ENCODE measurements at regions of chr16 and their contacts with region 1.

Region 1: DNA sequence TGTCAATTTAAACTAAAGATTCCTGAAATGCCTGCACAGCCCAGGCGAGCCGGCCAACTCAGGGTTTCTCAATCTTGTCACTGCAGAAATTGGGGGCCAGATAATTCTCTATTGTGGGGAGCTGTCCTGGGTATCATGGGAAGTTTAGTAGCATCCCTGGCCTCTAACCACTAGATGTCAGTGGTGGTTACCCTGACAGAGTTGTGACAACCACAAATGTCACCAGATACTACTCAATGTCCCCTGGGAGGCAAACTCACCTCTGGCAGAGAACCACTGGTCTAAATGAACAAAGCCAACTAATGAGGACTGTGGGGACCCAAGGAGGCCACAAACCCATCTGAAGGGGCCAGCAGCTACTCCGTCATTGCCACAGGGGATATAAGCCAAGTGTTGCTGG is 90.9 kb downstream of the MYH11 start:
- DNase-seq: peak; percentile 81
- ATAC-seq: peak; percentile 99
- H3K4me3 ChIP-seq: no peak overlapping the region
- H3K4me3 Mint-ChIP-seq: no peak overlapping the region
- H3K27ac ChIP-seq: no peak overlapping the region
- H3K27ac Mint-ChIP-seq: peak overlapping the region; percentile 22
- H3K4me1 ChIP-seq: peaks cover 0 to 5% of the 10 kb centered on the region in 2 donors
- H3K4me1 Mint-ChIP-seq: peaks cover 3% of the 10 kb centered on the region
- H3K27me3 ChIP-seq: peaks cover 0 to 9% (median 2%) of the 10 kb centered on the region in 4 experiments
- H3K27me3 Mint-ChIP-seq: peaks cover 17% of the 10 kb centered on the region
- CTCF ChIP-seq: peak; percentile 75

Region 2: DNA sequence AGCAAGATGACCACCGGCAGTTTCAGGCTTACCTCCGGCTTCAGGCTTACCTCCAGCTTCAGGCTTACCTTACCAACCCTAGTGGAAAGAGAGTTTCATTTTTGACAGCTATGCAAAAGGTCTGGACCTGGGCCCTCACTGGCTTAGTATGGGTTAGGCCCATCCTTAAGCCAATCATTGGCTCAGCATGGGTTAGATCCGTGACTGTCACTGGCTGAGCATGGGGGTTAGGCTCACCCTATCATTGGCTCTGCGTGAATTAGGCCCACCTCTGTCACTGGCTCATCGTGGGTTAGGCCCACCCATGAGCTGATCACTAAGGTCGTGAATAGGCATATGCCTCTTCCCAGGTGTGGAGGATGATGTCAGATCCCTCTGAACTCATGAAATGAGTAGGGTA is 107.7 kb before region 1 on chr16:
- CTCF ChIA-PET with region 1: no interaction called
- POLR2A ChIA-PET with region 1: no interaction called
- intact Hi-C with region 1: no loop called
- DNase-seq: no peak
- ATAC-seq: peak; percentile 19
- H3K4me3 ChIP-seq: no peak overlapping the region
- H3K4me3 Mint-ChIP-seq: peak overlapping the region; percentile 49
- H3K27ac ChIP-seq: peak overlapping the region; percentile 72 to 89
- H3K27ac Mint-ChIP-seq: peak overlapping the region; percentile 86
- H3K4me1 ChIP-seq: peaks cover 26 to 36% of the 10 kb centered on the region in 2 donors
- H3K4me1 Mint-ChIP-seq: peaks cover 62% of the 10 kb centered on the region
- H3K27me3 ChIP-seq: no peaks in the 10 kb centered on the region
- H3K27me3 Mint-ChIP-seq: no peaks in the 10 kb centered on the region
- CTCF ChIP-seq: no peak

Region 3: DNA sequence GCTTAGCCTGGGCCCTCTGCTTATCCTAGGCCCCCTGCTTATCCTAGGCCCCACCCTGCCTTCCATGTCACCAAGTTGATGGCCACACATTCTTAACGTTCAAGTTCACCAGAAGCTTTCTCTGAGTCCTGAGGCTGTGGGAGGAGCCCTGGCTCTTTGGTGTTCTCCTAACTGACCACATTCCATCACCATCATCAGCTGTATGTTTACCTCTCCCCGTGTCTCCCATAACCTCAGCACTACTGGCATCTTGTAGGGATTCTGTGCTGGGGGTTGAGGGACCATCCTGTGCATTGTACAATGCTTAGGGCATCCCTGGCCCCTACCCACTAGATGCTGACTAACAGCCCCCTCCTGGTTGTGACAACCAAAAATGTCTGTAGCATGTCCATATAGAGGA is 16.5 kb before region 1 on chr16:
- CTCF ChIA-PET with region 1: no interaction called
- POLR2A ChIA-PET with region 1: no interaction called
- intact Hi-C with region 1: no loop called
- DNase-seq: no peak
- ATAC-seq: no peak
- H3K4me3 ChIP-seq: no peak overlapping the region
- H3K4me3 Mint-ChIP-seq: no peak overlapping the region
- H3K27ac ChIP-seq: no peak overlapping the region
- H3K27ac Mint-ChIP-seq: no peak overlapping the region
- H3K4me1 ChIP-seq: no peaks in the 10 kb centered on the region
- H3K4me1 Mint-ChIP-seq: no peaks in the 10 kb centered on the region
- H3K27me3 ChIP-seq: no peaks in the 10 kb centered on the region
- H3K27me3 Mint-ChIP-seq: no peaks in the 10 kb centered on the region
- CTCF ChIP-seq: no peak

Region 4: GRCh38 chr16:15822957-15823356 is 57.1 kb after region 1 on chr16:
- CTCF ChIA-PET with region 1: interaction called, 27 read pairs
- POLR2A ChIA-PET with region 1: no interaction called
- intact Hi-C with region 1: loop called (anchors 1 kb)
- DNase-seq: no peak
- ATAC-seq: no peak
- H3K4me3 ChIP-seq: no peak overlapping the region
- H3K4me3 Mint-ChIP-seq: no peak overlapping the region
- H3K27ac ChIP-seq: no peak overlapping the region
- H3K27ac Mint-ChIP-seq: no peak overlapping the region
- H3K4me1 ChIP-seq: no peaks in the 10 kb centered on the region
- H3K4me1 Mint-ChIP-seq: no peaks in the 10 kb centered on the region
- H3K27me3 ChIP-seq: no peaks in the 10 kb centered on the region
- H3K27me3 Mint-ChIP-seq: peaks cover 3% of the 10 kb centered on the region
- CTCF ChIP-seq: no peak

Region 5: DNA sequence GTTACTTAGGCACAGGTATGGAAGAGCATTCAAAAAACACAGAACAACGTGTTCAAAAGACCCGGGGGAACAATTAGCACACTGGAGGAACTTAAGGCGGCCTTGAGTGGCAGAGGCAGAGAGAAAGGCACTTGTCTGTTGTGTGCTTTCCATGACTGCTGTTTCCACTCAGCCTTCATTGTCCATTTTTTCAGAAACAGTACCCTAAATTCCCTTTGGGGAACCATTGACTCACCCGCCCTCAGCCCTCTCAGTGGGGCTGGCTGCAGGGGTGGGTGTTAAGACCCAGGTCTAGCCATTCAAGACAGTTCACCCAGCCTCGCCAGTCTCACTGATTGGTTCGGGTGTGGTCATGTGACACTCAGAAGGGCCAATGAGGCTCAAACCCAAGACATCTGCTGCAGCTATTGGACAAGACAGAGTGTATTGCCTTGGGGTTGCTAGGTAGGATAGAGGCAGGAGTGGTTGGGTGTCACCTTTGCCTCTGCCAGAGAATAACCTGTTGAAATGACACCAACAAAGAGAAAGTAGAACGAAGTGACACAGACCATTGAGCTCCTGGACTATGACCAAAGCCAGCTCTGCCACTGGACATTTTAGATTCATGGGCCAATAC is 142.1 kb after region 1 on chr16:
- CTCF ChIA-PET with region 1: no interaction called
- POLR2A ChIA-PET with region 1: no interaction called
- intact Hi-C with region 1: no loop called
- DNase-seq: peak; percentile 77
- ATAC-seq: peak; percentile 98
- H3K4me3 ChIP-seq: no peak overlapping the region
- H3K4me3 Mint-ChIP-seq: peak overlapping the region; percentile 23
- H3K27ac ChIP-seq: peak overlapping the region in 1 of 2 donors; percentile 2
- H3K27ac Mint-ChIP-seq: no peak overlapping the region
- H3K4me1 ChIP-seq: peaks cover 0 to 3% of the 10 kb centered on the region in 2 donors
- H3K4me1 Mint-ChIP-seq: peaks cover 9% of the 10 kb centered on the region
- H3K27me3 ChIP-seq: no peaks in the 10 kb centered on the region
- H3K27me3 Mint-ChIP-seq: no peaks in the 10 kb centered on the region
- CTCF ChIP-seq: no peak

Region 6: DNA sequence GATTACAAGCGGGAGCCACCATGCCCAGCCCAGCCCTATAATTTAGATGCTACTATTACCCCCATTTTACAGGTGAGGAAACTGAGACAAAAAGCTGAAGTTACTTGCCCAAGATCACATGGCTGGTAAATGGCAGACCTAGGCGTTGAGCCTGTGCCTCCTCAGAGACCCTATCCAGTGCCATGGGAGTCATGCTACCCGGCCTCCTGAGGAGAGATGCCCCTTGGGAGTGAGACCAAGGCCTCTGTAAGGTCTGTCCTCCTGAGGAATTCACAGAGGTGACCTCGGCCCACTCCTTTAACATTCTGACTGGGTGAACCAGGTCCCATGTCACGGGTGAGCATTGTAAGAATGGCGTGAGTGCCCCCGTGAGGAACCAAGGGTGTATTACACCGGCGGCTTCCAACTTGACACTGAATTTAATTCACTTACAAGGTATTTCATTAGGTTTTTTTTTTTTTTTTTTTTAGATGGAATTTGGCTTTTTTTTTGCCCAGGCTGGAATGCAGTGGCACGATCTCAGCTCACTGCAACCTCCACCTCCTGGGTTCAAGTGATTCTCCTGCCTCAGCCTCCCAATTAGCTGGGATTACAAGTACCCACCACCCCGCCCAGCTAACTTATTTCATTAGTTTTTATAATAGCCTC is 361.7 kb after region 1 on chr16:
- CTCF ChIA-PET with region 1: interaction called, 25 read pairs
- POLR2A ChIA-PET with region 1: no interaction called
- intact Hi-C with region 1: loop called (anchors 1 kb)
- DNase-seq: peak; percentile 75
- ATAC-seq: peak; percentile 92
- H3K4me3 ChIP-seq: no peak overlapping the region
- H3K4me3 Mint-ChIP-seq: no peak overlapping the region
- H3K27ac ChIP-seq: no peak overlapping the region
- H3K27ac Mint-ChIP-seq: peak overlapping the region; percentile 46
- H3K4me1 ChIP-seq: peaks cover 0 to 3% of the 10 kb centered on the region in 2 donors
- H3K4me1 Mint-ChIP-seq: peaks cover 3% of the 10 kb centered on the region
- H3K27me3 ChIP-seq: no peaks in the 10 kb centered on the region
- H3K27me3 Mint-ChIP-seq: no peaks in the 10 kb centered on the region
- CTCF ChIP-seq: peak; percentile 95

Measured in B cell (primary cell).